ENCODE measurements at regions of chr9 and their contacts with region 1.

Region 1: DNA sequence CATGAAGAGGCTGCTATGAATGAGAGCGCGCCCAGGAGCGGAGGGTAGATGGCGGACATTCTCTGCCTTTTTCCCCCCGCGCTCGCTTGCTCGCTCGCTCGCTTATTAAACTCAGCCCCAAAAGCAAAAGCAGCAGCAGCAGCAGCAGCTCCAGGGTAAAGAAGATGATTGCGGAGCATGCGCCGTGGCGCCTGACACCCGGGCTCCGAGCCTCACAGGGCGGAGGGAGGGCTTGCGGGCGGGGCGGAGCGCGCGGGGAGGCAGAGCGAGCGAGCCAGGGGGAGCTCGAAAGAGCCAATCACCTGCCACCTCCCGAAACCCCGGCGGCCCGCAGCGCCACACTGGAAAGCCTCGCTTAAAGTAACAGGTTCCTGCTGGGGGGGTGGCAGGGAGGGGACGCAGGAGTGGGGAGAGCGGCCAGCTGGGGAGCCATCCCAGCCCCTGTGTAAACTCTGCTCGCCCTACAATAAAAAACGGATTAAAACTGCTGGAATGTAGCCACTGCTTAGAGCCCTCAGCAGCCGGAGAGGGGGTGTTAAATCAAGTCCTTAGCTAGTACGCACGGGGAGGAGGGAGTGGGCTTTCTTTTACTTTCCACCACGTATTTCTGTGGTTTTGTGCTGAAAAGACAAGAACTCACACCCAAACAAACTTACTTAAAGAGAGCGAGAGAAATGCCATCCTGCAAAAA is at the start of gene MLLT3:
- DNase-seq: peak; percentile 96
- H3K4me3 Mint-ChIP-seq: peak within 1 kb of the TSS; percentile 92
- H3K27ac Mint-ChIP-seq: peak within 1 kb of the TSS; percentile 94
- H3K4me1 Mint-ChIP-seq: peaks cover 43% of the 10 kb centered on the region
- H3K27me3 Mint-ChIP-seq: no peaks in the 10 kb centered on the region
- total RNA-seq, gene MLLT3: 22.4 and 24.9 TPM in 2 replicates

Region 2: GRCh38 chr9:19976226-19976625 is 646.2 kb before region 1 on chr9:
- intact Hi-C with region 1: loop called (anchors 5 kb)
- DNase-seq: no peak
- H3K4me3 Mint-ChIP-seq: no peak overlapping the region
- H3K27ac Mint-ChIP-seq: peak overlapping the region; percentile 83
- H3K4me1 Mint-ChIP-seq: peaks cover 28% of the 10 kb centered on the region
- H3K27me3 Mint-ChIP-seq: no peaks in the 10 kb centered on the region

Region 3: DNA sequence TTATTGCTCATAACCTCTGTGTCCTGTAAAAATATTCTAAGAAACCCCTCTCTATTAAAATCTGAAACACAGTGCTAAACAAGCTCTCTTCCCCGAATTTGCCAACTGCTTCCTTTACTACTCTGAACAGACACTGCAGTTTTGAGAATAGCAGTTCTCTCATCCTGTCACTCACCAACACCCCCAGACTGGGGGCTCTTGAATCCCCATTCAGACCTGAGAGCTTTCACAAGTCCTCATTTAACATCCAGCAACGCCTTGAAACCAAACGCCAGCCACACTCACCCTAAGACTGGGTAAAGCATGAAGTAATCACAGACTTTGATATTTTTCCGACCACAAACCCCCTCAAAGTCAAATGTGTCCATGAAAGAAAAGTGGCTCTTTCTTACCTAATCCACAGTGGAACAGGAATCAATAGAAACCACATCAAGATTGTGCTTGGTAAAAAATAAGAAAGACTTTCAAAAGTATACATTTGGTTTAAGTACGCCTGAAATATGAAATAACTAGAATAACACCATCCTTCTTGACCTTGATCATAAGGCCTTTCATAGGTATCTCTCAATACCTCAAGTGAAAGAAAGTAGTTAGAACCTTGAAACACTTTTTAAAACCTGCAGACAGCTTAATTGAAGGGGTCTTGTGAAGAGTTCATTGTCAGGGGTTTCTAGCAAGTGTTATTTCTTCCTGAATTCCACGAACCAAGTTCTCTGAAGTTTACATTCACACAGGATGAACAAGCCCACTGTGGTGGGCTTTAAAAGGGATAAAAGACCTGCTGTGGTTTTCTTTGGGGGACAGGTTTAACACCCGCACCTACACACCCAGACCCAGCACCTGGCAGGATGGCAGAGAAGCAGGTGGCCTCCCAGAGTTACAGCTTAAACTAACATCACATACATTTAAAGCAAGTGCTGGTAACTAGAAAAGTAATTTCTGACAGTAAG is 412.8 kb before region 1 on chr9:
- intact Hi-C with region 1: loop called (anchors 1 kb)
- DNase-seq: peak; percentile 46
- H3K4me3 Mint-ChIP-seq: peak overlapping the region; percentile 23
- H3K27ac Mint-ChIP-seq: peak overlapping the region; percentile 84
- H3K4me1 Mint-ChIP-seq: peaks cover 31% of the 10 kb centered on the region
- H3K27me3 Mint-ChIP-seq: no peaks in the 10 kb centered on the region

Region 4: DNA sequence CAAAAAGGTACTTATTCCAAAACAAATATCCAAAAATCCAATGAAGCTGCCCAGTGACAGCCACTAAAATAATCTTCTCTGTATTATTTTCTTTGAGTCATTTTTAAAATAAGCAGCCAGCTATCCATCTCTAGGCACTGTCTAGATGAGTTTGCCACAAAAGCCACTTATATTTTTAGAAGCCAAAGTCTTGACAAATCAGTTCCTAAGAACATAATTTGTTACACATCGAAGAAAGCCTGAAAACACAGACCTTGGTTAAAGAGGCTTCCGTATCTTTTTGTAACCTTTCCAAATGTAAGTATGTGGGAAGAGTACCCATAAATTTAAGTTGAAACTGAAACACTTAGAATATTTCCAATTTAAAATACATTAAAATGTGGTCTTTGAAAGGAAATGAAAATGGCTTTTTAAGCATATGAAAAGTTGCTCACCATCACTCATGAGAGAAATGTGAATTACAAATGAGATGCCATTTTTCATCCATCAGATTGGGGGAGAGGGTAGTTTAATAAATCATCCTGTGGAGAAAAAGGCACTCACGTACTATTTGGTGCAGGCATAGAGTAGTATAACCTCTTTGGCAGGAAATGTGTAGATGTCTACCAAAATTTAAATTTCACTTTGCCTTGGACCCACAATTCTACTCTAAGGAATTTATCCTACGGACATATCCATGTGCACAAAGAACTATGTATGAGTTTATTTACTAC is 180.6 kb before region 1 on chr9:
- intact Hi-C with region 1: loop called (anchors 2 kb)
- DNase-seq: no peak
- H3K4me3 Mint-ChIP-seq: no peak overlapping the region
- H3K27ac Mint-ChIP-seq: peak overlapping the region; percentile 24
- H3K4me1 Mint-ChIP-seq: peaks cover 36% of the 10 kb centered on the region
- H3K27me3 Mint-ChIP-seq: no peaks in the 10 kb centered on the region

Region 5: DNA sequence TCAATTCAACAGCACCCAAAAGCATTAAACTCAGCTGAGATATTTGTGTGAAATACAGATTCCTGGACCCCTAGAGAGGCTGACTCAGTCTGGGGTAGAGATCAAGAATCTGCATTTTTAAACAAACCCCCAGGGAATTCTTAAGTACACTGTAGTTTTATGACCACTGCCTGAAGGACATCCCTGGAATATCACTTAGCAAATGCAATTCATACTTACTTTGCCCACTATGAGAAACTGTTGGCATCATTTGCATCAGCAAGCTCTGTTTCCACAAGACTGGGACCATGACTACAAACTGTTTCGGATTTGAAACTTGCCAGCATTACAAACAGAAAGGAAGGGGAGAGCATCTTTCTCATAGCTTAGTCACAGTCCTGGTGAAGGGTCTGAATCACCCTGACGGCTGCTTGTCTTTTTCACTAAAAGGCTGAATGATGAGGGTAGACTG is 63.9 kb before region 1 on chr9:
- intact Hi-C with region 1: loop called (anchors 2 kb)
- DNase-seq: no peak
- H3K4me3 Mint-ChIP-seq: no peak overlapping the region
- H3K27ac Mint-ChIP-seq: peak overlapping the region; percentile 54
- H3K4me1 Mint-ChIP-seq: peaks cover 72% of the 10 kb centered on the region
- H3K27me3 Mint-ChIP-seq: no peaks in the 10 kb centered on the region

Region 6: DNA sequence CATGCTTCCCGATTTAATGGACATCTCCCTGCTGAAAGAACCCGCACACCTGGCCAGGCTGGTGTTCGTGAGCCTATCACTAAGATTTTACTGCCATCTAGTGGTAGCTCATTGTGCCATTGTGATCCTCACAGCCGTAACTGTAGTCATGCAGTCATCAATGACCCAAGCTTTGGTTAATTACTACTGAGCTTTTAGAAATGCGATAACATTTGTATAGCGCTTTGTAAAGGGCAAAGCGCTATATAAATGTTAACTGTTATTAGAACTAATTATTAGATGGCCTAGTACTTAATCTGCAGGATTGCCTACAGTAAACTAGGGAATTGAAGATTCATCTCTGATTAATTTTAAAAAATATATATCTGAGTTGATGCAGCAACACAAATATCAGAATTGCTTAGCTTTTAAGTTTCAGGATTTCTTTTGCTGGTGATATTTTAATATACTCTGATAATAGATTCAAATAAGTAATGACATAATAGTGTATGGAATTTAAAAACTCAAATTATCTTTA is 318.8 kb after region 1 on chr9:
- intact Hi-C with region 1: loop called (anchors 1 kb)
- DNase-seq: peak; percentile 40
- H3K4me3 Mint-ChIP-seq: no peak overlapping the region
- H3K27ac Mint-ChIP-seq: no peak overlapping the region
- H3K4me1 Mint-ChIP-seq: peaks cover 3% of the 10 kb centered on the region
- H3K27me3 Mint-ChIP-seq: no peaks in the 10 kb centered on the region

Region 7: GRCh38 chr9:21039302-21039701 is 416.8 kb after region 1 on chr9:
- intact Hi-C with region 1: no loop called
- DNase-seq: no peak
- H3K4me3 Mint-ChIP-seq: no peak overlapping the region
- H3K27ac Mint-ChIP-seq: no peak overlapping the region
- H3K4me1 Mint-ChIP-seq: peaks cover 10% of the 10 kb centered on the region
- H3K27me3 Mint-ChIP-seq: peaks cover 4% of the 10 kb centered on the region

Region 8: GRCh38 chr9:21110708-21111576 is 488.5 kb after region 1 on chr9:
- intact Hi-C with region 1: loop called (anchors 1 kb)
- DNase-seq: no peak
- H3K4me3 Mint-ChIP-seq: no peak overlapping the region
- H3K27ac Mint-ChIP-seq: no peak overlapping the region
- H3K4me1 Mint-ChIP-seq: no peaks in the 10 kb centered on the region
- H3K27me3 Mint-ChIP-seq: peaks cover 27% of the 10 kb centered on the region